Activated CD4-positive, alpha-beta memory T cell treated with anti-CD3 and anti-CD28 coated beads for 36 hours (primary cell): ENCODE measurements at regions of chr2 and their contacts with region 1.

Region 1: DNA sequence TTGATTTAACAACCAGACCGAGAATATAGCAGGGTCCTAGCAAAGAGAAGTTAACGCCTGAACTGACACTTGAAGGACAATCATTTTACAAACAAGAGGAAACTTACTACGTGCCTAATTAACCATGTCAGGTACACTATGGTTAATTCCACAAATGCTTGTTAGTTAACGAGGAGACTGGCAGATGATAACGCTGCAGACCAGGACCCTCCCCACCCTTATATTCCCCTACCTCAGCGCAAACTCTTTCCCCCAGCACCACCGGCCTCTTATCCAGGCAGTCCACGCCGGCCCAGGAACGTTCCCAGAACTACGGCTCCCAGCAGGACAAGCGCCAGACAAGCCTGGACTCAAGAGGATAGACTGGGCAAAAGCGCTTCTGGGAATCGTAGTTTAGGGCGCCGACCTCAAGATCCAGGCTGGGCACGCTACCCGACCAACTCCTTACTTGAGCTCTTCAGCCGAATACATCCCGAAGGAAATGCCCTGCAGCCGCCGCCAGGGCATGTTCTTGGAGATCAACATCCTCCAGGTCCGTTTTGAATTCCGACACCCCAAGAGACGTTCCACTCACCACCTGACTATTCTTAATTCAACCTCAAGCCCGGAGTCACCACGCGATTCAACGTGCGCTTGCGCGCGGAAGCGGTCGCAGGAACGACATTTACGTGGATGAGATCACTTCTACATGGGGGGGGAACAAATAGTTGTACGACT is at the start of gene POLR1A:
- DNase-seq: peak; percentile 90
- H3K4me3 Mint-ChIP-seq: peak within 1 kb of the TSS; percentile 94
- H3K27ac Mint-ChIP-seq: peak within 1 kb of the TSS; percentile 95
- H3K4me1 Mint-ChIP-seq: peaks cover 61% of the 10 kb centered on the region
- H3K27me3 Mint-ChIP-seq: no peaks in the 10 kb centered on the region
- total RNA-seq, gene POLR1A: 27.2 to 33.8 TPM

Region 2: DNA sequence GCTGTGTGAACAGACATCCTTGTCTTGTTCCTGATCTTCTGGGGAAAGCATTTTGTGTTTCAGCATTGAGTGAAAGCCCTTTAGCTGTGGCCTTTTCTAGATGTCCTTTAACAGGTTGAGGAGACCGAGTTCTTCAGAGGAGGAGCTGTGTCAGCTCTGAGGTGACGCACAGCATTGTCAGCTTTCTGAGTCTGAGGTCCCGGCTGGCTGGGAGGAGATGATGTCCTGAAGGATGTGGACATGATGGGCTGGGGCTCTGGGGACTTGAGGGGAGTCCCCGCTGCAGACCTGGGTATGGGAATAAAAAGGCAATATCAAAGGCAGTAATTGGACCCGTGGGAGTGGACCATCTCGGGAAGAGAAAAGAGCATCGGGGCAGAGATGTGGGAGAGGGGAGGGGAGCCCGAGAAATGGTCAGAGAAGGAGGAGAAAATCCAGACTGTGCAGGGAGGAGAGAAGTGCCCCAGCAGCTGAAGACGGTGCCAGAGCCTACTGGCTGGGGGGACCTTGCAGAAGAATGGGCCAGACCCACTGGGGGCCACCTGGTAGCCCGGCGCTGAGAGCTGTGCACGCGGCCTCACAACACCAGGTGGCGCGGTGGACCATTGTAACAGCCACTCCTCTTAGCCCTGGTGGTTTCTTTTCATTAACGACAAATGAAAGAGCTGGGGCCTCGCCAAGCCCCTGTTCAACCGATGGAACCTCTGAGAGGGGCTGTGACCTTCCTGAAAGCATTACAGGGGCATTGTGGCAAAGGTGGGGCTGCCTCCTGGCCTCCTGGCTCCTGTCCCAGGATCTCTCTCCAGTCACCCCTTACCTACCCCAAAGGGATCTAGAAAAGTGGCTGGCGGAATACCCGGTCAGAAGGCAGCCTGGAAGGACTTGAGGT is 278.2 kb before region 1 on chr2:
- CTCF ChIA-PET with region 1: interaction called, 10 read pairs
- POLR2A ChIA-PET with region 1: no interaction called
- intact Hi-C with region 1: no loop called
- DNase-seq: peak; percentile 86
- H3K4me3 Mint-ChIP-seq: no peak overlapping the region
- H3K27ac Mint-ChIP-seq: no peak overlapping the region
- H3K4me1 Mint-ChIP-seq: peaks cover 15% of the 10 kb centered on the region
- H3K27me3 Mint-ChIP-seq: peaks cover 3% of the 10 kb centered on the region

Region 3: DNA sequence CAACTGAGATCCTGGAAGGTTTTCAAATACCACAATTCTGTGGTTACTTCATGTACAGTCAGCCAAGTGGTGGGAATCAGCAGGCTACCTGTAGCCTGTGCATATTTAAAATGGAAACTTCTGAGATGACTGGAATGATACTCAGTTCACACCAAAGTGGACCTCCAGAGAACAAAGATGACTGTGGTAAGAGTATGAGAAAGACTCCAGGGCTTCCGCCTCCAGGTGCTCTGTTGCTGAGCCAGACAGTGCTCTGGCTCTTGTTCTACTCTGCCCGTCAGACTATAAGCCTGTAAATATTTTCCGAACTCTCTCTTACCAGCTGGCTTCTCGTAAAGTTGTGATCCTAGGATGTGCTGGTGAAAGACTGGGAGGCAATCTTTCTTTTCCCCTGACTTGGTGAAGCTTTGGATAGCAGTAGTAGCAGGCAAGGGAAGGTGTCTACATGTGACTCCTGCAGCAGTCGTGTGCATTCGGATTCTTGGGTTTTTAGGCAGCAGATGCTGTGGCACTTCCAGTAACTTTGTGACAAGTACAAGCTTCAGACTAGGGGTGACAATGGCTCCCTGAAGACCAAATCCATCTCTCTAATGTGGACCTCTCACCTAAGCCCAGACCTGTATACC is 239.8 kb before region 1 on chr2:
- CTCF ChIA-PET with region 1: no interaction called
- POLR2A ChIA-PET with region 1: no interaction called
- intact Hi-C with region 1: loop called (anchors 1 kb)
- DNase-seq: peak; percentile 71
- H3K4me3 Mint-ChIP-seq: no peak overlapping the region
- H3K27ac Mint-ChIP-seq: no peak overlapping the region
- H3K4me1 Mint-ChIP-seq: peaks cover 60% of the 10 kb centered on the region
- H3K27me3 Mint-ChIP-seq: no peaks in the 10 kb centered on the region

Region 4: GRCh38 chr2:86139981-86140380 is 34.6 kb after region 1 on chr2:
- CTCF ChIA-PET with region 1: no interaction called
- POLR2A ChIA-PET with region 1: interaction called, 3 read pairs
- intact Hi-C with region 1: loop called (anchors 2 kb)
- DNase-seq: no peak
- H3K4me3 Mint-ChIP-seq: no peak overlapping the region
- H3K27ac Mint-ChIP-seq: peak overlapping the region; percentile 54
- H3K4me1 Mint-ChIP-seq: peaks cover 16% of the 10 kb centered on the region
- H3K27me3 Mint-ChIP-seq: no peaks in the 10 kb centered on the region

Region 5: GRCh38 chr2:86185517-86186212 is 80.3 kb after region 1 on chr2:
- CTCF ChIA-PET with region 1: no interaction called
- POLR2A ChIA-PET with region 1: interaction called, 8 read pairs
- intact Hi-C with region 1: loop called (anchors 2 kb)
- DNase-seq: no peak
- H3K4me3 Mint-ChIP-seq: peak overlapping the region; percentile 57
- H3K27ac Mint-ChIP-seq: peak overlapping the region; percentile 96
- H3K4me1 Mint-ChIP-seq: peaks cover 71% of the 10 kb centered on the region
- H3K27me3 Mint-ChIP-seq: no peaks in the 10 kb centered on the region

Region 6: DNA sequence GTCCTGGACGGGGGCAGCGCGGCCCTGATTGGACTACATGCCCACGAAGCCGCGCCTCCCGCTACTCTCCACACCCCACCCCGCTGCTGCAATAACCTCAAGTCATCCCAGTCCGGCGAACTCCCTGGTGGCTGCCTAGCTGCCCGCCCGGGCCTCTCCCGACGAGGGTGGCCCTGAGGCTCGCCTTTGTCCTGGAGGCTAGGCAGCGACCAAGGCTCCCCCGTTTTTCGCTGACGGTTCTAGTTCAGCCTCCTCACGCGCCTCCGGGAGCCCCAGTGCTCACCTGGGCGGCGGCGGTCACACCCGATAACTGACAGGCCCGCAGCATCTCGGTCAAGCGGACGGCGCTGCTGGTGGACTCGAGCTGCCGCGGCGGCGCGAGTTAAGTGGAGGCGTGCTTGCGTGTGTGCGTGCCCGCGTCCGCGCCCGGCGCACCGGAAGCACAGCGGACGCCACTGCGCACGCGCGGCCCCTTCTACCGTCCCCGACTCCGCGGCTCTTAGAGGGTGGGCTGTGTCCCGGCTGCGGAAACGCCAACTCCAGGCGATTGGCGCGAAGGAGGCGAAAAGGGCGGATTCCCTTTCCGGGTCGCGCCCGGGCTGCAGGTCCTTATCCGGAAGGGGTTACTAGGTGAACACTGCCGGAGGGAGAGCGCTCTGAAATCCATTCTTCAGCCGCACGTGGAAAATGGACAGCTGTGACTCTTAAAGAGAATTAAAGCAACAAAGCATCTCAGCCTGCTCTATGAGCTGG is 89.8 kb after region 1 on chr2 and contains the start of gene IMMT:
- CTCF ChIA-PET with region 1: no interaction called
- POLR2A ChIA-PET with region 1: interaction called, 10 read pairs
- intact Hi-C with region 1: loop called (anchors 2 kb)
- DNase-seq: peak; percentile 96
- H3K4me3 Mint-ChIP-seq: peak within 1 kb of the TSS; percentile 91
- H3K27ac Mint-ChIP-seq: peak within 1 kb of the TSS; percentile 88
- H3K4me1 Mint-ChIP-seq: peaks cover 39% of the 10 kb centered on the region
- H3K27me3 Mint-ChIP-seq: no peaks in the 10 kb centered on the region
- total RNA-seq, gene IMMT: 170 to 172 TPM

Region 7: GRCh38 chr2:86263715-86264562 is 158.5 kb after region 1 on chr2:
- CTCF ChIA-PET with region 1: no interaction called
- POLR2A ChIA-PET with region 1: no interaction called
- intact Hi-C with region 1: no loop called
- DNase-seq: no peak
- H3K4me3 Mint-ChIP-seq: no peak overlapping the region
- H3K27ac Mint-ChIP-seq: no peak overlapping the region
- H3K4me1 Mint-ChIP-seq: no peaks in the 10 kb centered on the region
- H3K27me3 Mint-ChIP-seq: peaks cover 5% of the 10 kb centered on the region